Activated CD8-positive, alpha-beta memory T cell treated with anti-CD3 and anti-CD28 coated beads, Interleukin-2, amount 10 ng/mL, durations not matched to agents 7 days and 5 days (primary cell): ENCODE measurements at regions of chr20 and their contacts with region 1.

Region 1: DNA sequence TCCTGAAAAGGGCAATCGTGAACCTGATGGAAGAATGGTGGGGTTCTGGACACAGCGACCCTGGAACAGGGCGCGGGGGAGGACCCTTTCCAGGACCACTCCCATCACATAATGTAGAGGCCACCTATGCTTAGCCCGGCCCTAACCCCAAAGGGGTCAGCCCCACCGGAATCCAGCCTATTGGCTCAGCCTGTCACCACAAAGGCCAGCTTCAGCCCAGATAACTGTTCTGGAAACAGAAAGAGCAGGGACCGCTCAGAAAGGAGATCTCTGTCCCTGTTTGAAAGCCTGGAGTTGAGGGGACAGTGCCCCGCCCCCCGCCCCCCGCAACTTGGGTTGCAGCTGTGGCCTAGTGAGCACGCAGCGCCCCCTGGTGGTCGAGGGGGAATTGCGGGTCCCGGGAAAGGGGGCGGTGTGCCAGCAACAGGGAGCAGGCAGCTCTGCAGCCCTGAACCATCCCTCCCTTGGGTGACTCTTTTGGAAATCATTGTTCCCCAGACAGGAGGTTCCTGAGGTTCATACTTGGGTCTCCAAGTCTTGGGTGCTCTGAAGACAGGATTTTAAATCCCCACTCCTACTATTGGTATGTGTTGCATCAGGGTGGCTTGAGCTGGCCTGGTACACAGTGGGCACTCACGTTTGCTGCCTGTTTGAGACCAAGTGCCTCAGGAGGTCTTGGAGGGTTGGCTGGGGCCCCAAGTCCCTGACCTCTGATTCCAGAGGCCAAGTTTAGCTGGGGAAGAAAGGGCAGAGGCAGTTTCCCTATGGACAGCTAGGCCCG is 1.5 kb downstream of the SIGLEC1 start:
- DNase-seq: peak; percentile 80
- ATAC-seq: peak; percentile 78
- H3K4me3 Mint-ChIP-seq: no peak overlapping the region
- H3K27ac Mint-ChIP-seq: no peak overlapping the region
- H3K4me1 Mint-ChIP-seq: peaks cover 6% of the 10 kb centered on the region
- H3K27me3 Mint-ChIP-seq: peaks cover 8% of the 10 kb centered on the region

Region 2: GRCh38 chr20:3563548-3564177 is 147.2 kb before region 1 on chr20:
- CTCF ChIA-PET with region 1: interaction called, 42 read pairs
- DNase-seq: no peak
- ATAC-seq: peak; percentile 47
- H3K4me3 Mint-ChIP-seq: no peak overlapping the region
- H3K27ac Mint-ChIP-seq: no peak overlapping the region
- H3K4me1 Mint-ChIP-seq: no peaks in the 10 kb centered on the region
- H3K27me3 Mint-ChIP-seq: no peaks in the 10 kb centered on the region

Region 3: DNA sequence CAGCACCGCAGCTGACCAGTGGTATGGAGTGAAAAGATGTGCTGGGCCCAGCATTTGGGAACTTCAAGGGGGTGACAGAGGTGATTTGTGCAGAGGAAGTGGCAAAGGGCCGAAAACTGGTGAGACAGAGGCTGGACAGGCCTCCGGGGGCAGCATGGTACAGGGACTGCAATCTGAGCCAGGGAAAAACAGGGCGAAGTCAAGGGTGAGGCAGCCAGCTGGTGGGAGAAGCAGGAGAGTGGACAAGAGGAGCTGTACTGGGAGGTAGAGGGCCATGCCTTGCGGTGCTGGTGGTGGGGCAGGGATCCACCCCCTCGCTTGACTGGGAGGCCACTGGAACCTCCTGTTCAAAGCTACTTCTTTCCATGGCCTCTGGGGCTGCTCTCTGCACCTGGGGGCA is 40.4 kb before region 1 on chr20:
- CTCF ChIA-PET with region 1: interaction called, 122 read pairs
- DNase-seq: no peak
- ATAC-seq: no peak
- H3K4me3 Mint-ChIP-seq: no peak overlapping the region
- H3K27ac Mint-ChIP-seq: no peak overlapping the region
- H3K4me1 Mint-ChIP-seq: peaks cover 25% of the 10 kb centered on the region
- H3K27me3 Mint-ChIP-seq: peaks cover 81% of the 10 kb centered on the region

Region 4: DNA sequence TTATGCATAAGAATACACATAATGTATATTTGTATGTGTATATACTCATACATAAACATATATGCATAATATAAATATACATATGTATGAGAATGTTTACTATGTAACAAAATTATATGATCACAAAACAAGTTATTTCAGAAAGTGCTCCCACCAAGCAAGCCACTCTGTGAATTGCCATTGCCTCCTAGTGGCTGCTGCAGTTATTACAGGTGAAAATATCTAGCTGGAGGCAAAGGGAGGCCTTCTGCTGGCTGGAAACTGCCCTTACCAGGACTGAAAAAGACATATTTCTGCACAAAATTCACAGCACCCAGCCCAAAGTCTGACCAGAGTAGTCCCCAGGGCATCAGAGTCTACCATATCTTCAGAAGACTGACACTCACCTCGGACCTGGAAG is 14.7 kb before region 1 on chr20:
- CTCF ChIA-PET with region 1: interaction called, 46 read pairs
- DNase-seq: no peak
- ATAC-seq: no peak
- H3K4me3 Mint-ChIP-seq: no peak overlapping the region
- H3K27ac Mint-ChIP-seq: no peak overlapping the region
- H3K4me1 Mint-ChIP-seq: no peaks in the 10 kb centered on the region
- H3K27me3 Mint-ChIP-seq: no peaks in the 10 kb centered on the region